Lower leg skin (tissue), 4 donors: ENCODE measurements at regions of chr1 and their contacts with region 1.

Region 1: DNA sequence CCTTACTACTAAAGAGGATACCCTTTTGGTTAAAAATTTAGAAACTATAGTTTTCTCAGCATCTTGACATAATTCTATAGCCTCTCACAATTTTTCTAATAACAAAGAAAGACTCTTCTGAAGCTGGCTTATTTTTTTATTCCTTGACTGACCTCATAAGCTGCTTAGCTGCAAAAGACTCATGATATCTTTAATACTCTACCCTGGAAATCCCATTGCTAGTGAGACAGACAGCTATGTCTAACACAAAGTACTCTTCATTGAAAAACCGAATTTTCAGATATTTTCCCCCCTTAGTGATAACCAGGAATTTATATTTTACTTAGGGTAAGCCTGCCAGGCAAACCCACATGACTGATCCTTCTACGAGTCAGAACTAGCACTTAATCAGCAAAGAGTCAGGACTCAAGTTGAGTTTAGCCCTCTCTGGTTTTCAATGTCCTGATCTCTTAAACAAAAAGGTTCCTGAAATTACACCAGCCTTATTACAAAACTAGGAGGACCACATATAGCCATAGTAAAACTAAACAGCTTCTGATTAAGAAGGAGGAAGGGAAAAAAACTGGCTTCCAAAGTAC is 56.9 kb downstream of the ENAH start:
- DNase-seq: no peak
- H3K4me3 ChIP-seq: no peak overlapping the region
- CTCF ChIP-seq: no peak
- POLR2A ChIP-seq: no peak

Region 2: GRCh38 chr1:225617479-225617878 is 21.4 kb after region 1 on chr1:
- intact Hi-C with region 1: loop called (anchors 1 kb)
- DNase-seq: no peak
- H3K4me3 ChIP-seq: no peak overlapping the region
- CTCF ChIP-seq: no peak
- POLR2A ChIP-seq: no peak

Region 3: DNA sequence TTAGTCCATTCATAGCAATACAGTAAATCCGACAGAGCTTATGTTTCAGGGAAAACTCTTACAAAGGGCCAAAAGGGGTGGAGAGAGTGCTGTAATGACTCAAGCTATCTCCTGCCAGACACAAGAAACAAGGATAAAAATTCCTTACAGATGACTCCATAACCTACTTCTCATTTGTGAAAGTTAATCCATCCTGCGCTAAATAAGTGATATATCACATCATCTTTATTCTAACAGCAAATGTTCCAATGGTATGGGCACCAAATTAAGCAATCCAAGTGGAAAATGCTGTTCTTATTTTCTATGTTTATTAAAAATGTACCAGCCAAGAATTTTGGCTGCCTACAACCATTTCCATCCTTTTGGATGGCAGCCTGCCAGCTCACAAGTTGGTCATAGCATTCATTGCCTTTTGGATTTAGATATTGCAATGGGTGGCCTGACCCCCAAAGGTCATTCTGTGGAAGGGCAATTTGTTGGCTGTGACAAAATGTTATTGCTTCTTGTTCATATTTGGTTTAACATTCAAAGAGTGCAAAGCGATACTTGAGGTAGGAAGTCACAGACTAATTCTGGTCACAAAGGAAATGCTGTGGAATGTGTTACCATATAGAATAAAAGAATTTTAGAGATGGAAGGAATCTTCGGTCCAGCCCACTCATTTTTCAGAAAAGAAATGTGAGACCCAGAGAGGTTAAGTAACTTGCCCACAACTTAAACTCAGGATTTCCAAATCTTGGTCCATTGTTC is 59.6 kb after region 1 on chr1:
- intact Hi-C with region 1: no loop called
- DNase-seq: peak in 1 of 2 donors; percentile 86
- H3K4me3 ChIP-seq: no peak overlapping the region
- CTCF ChIP-seq: no peak
- POLR2A ChIP-seq: no peak

Region 4: GRCh38 chr1:225780630-225781029 is 184.6 kb after region 1 on chr1:
- intact Hi-C with region 1: no loop called
- DNase-seq: no peak
- H3K4me3 ChIP-seq: no peak overlapping the region
- CTCF ChIP-seq: no peak
- POLR2A ChIP-seq: no peak